ENCODE measurements at regions of chr14 and their contacts with region 1.

Region 1: GRCh38 chr14:67285876-67286452 is 44.7 kb downstream of the PALS1 start:
- DNase-seq: peak; percentile 64
- ATAC-seq: peak; percentile 24; the same call in 1 of the 2 replicates
- H3K4me3 ChIP-seq: no peak overlapping the region
- H3K27ac ChIP-seq: no peak overlapping the region
- H3K4me1 ChIP-seq: no peaks in the 10 kb centered on the region
- H3K27me3 ChIP-seq: no peaks in the 10 kb centered on the region
- CTCF ChIP-seq: peak; percentile 69
- POLR2A ChIP-seq: no peak
- RAD21 ChIP-seq: peak; percentile 65

Region 2: DNA sequence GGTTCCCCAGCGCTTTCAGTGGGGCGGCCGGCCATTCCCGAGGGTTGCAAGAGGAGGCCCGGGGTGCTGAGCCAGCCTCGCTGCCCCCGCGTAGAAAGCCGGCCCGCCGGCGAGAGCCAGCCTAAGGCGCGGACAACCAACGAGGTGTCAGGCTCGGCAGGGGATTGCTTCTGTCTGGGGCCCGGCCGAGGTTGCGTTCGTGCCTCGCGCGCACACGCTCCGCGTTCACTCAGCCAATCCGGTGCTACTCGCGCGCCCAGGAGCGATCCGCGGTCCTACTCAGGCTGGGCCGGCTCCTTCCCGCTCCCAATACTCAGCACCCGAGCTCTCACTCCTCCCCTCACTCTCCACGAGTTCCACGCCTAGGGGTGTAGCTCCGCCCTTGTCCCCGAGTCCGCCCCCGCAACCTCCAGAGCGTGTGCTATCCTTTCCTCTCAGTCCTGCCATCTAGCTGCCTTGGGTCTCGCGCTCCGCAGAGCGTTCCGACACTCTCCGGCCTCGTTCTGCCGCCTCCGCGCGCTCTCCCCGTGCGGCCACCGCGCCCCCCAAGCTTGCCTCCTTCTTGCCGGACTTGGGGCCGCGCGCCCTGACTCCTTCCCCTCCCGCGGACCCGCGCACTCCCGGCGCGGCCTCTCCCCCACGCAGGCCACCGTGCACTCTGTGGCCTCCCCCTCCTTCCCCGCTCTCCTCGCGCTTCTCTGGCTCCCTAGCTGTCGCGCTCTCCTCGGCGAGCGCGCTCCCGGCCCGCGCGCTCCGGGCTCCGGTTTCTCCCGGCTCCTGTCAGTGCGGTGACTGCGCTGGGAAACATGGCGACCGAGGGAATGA is 778.0 kb before region 1 on chr14 and contains the start of gene GPHN:
- CTCF ChIA-PET with region 1: no interaction called
- POLR2A ChIA-PET with region 1: no interaction called
- dilution Hi-C with region 1: no loop called
- in situ Hi-C with region 1: loop called (anchors 25 kb)
- intact Hi-C with region 1: no loop called
- DNase-seq: peak; percentile 97
- ATAC-seq: peak; percentile 97
- H3K4me3 ChIP-seq: peak within 1 kb of the TSS; percentile 96
- H3K27ac ChIP-seq: peak within 1 kb of the TSS; percentile 34
- H3K4me1 ChIP-seq: no peaks in the 10 kb centered on the region
- H3K27me3 ChIP-seq: no peaks in the 10 kb centered on the region
- CTCF ChIP-seq: peak; percentile 25; the same call in 1 of the 2 replicates
- POLR2A ChIP-seq: no peak; the same call in 1 of the 2 replicates
- RAD21 ChIP-seq: no peak
- total RNA-seq, gene GPHN: 7.2 and 8.1 TPM in 2 replicates

Region 3: DNA sequence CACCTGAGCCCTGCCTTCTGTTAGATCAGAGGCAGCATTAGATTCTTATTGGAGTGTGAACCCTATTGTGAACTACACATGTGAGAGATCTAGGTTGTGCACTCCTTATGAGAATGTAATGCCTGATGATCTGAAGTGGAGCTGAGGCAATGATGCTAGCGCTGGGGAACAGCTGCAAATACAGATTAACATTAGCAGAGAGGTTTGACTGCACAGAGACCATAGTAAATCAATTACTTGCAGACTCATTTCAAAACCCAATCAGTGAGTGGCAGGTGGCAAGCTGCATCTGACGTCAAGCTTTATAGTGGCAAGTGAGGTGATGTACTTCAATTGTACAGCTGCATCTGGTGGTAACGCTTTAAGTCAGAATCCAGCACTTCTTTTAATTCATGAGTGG is 636.5 kb before region 1 on chr14:
- CTCF ChIA-PET with region 1: no interaction called
- POLR2A ChIA-PET with region 1: no interaction called
- dilution Hi-C with region 1: no loop called
- in situ Hi-C with region 1: loop called (anchors 25 kb)
- intact Hi-C with region 1: no loop called
- DNase-seq: no peak
- ATAC-seq: no peak
- H3K4me3 ChIP-seq: no peak overlapping the region
- H3K27ac ChIP-seq: no peak overlapping the region
- H3K4me1 ChIP-seq: no peaks in the 10 kb centered on the region
- H3K27me3 ChIP-seq: no peaks in the 10 kb centered on the region
- CTCF ChIP-seq: no peak
- POLR2A ChIP-seq: no peak
- RAD21 ChIP-seq: no peak